Right cardiac atrium (tissue), 5 donors: ENCODE measurements at regions of chr2 and their contacts with region 1.

Region 1: GRCh38 chr2:86176597-86176996 is 18.7 kb downstream of the IMMT start:
- DNase-seq: no peak
- ATAC-seq: no peak
- H3K4me3 ChIP-seq: no peak overlapping the region
- H3K27ac ChIP-seq: no peak overlapping the region
- H3K4me1 ChIP-seq: no peaks in the 10 kb centered on the region
- H3K27me3 ChIP-seq: no peaks in the 10 kb centered on the region

Region 2: DNA sequence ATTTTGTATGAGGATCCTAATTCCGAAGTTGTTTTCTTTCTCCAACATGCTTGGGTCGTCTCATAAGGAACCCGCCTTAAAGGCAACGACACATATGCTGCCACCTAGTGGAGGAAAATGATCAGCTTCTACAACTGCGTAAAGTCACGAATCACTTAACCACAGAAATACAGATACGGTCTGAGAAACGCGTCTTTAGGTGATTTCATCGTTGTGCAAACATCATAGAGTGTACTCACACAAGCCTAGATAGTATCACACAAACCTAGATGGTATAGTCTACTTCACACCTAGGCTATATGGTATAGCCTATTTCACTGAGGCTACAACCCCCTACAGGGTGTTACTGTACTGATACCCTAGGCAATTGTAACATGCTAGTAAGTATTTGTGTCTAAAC is 469.3 kb before region 1 on chr2:
- intact Hi-C with region 1: no loop called
- DNase-seq: peak in 1 of 3 donors; percentile 20
- ATAC-seq: peak in 1 of 2 donors; percentile 38
- H3K4me3 ChIP-seq: no peak overlapping the region
- H3K27ac ChIP-seq: no peak overlapping the region
- H3K4me1 ChIP-seq: peaks cover 21% of the 10 kb centered on the region
- H3K27me3 ChIP-seq: no peaks in the 10 kb centered on the region

Region 3: DNA sequence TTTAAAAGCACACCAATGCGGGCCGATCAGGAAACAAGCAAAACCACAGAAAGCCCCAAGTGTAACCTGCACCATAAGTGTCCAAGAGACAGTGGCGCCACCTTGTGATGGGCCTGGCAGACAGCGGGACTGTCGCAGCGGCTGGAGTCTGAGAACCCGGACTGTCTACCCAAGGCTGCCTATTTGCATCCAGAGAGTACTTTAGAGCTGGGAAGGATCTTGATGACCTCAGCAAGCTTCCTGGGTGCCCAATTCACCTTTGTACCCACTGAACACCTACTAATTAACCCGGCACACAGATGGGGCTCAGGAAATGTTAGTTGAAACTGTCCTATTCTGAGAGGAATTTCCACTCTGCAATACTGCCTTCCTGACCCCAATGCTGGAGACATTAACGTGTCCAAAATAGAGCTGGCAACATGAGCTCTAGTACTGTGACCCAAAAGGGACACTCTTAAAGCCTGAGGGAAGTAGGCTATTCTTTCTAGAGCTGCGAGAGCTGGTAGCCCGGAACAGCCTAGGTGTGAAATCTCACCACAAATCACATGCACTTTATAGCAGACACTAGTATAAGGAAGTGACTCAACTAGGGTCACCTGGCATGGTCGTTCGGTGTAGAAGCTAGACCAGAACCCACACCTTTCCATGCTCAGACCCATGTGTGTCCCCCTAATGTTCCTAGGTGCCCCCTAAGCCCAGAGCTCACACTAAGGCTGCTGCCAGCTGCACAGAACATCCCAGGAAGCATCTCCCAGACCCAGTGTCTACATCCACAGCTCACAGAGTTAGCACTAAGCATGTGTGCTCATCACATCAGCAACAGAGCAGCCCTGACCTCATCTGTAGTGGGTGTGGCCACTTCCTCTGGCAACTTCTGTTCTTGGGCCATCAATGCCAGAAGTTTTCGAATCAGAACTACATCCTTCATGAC is 96.4 kb before region 1 on chr2:
- intact Hi-C with region 1: no loop called
- DNase-seq: peak; percentile 79 to 93 (median 92)
- ATAC-seq: peak; percentile 81 to 82
- H3K4me3 ChIP-seq: no peak overlapping the region
- H3K27ac ChIP-seq: no peak overlapping the region
- H3K4me1 ChIP-seq: no peaks in the 10 kb centered on the region
- H3K27me3 ChIP-seq: no peaks in the 10 kb centered on the region

Region 4: DNA sequence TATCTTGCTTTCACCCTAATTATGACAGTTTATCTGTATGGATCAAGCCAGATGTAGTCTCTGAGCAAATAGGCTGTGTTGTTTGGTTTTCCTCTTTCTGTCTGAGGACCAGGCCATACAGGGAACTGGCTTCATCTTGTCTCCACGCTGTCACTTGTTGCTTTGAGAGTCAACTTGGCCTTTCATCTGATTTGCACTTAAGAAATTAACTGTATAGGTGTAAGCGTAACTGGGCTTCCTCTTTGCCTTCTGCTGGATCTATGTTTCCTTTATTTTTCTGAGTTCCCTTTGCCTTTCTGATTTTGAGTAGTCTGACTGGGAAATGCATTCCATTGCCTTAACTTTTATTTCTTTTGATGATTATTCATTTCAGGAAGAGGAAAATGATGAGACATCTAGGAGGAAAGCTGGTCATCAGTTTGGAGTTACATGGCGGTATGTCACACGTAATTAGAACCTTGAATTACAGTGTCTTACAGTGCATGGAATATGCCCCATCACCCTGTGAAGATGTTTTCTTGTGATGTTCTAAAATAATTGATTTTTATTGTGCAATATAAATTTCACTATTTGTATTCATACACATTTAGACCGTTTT is 53.2 kb before region 1 on chr2:
- intact Hi-C with region 1: loop called in 1 of 4 experiments (anchors 10 kb)
- DNase-seq: no peak
- ATAC-seq: no peak
- H3K4me3 ChIP-seq: no peak overlapping the region
- H3K27ac ChIP-seq: no peak overlapping the region
- H3K4me1 ChIP-seq: no peaks in the 10 kb centered on the region
- H3K27me3 ChIP-seq: no peaks in the 10 kb centered on the region

Region 5: DNA sequence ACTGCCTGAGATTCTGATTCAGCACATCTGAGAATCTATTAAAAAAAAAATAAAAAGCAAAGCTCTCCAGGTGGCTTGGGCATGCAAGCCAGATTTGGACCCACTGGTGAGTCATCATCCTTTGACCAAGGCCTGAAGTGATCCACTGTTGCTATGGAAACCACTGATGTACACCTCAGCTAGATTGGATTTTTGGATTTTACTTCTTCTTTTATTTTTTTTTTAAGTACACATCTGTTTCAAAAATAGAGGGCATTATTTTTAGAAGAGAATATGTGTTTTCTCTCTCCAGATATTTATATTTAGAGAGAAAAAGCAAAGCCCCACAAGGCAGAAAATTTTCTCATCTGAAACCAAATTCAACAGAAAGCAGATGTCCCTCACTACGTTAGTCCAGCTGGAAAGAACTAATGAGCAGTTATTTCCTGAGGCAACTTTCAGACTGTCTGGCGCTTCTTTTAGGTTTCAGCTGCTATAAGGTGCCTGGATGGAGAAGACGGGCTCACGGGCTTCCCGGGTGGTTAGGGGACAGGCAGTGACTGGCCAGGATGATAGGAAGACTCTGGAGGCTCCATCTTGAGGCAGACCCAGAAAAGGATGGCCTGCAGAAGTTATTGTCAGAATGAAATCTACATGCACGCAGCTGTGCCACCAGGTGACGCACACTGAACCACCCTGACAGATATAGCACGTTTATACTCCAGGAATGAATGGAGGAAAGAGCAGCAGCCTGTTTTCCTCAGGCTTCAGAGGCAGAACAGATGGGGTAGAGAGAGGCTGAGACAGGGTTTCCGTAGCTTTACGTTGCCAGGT is 73.2 kb after region 1 on chr2:
- intact Hi-C with region 1: no loop called
- DNase-seq: no peak
- ATAC-seq: no peak
- H3K4me3 ChIP-seq: no peak overlapping the region
- H3K27ac ChIP-seq: no peak overlapping the region
- H3K4me1 ChIP-seq: peaks cover 3% of the 10 kb centered on the region
- H3K27me3 ChIP-seq: no peaks in the 10 kb centered on the region